Naive thymus-derived CD4-positive, alpha-beta T cell (primary cell): ENCODE measurements at regions of chr9 and their contacts with region 1.

Region 1: DNA sequence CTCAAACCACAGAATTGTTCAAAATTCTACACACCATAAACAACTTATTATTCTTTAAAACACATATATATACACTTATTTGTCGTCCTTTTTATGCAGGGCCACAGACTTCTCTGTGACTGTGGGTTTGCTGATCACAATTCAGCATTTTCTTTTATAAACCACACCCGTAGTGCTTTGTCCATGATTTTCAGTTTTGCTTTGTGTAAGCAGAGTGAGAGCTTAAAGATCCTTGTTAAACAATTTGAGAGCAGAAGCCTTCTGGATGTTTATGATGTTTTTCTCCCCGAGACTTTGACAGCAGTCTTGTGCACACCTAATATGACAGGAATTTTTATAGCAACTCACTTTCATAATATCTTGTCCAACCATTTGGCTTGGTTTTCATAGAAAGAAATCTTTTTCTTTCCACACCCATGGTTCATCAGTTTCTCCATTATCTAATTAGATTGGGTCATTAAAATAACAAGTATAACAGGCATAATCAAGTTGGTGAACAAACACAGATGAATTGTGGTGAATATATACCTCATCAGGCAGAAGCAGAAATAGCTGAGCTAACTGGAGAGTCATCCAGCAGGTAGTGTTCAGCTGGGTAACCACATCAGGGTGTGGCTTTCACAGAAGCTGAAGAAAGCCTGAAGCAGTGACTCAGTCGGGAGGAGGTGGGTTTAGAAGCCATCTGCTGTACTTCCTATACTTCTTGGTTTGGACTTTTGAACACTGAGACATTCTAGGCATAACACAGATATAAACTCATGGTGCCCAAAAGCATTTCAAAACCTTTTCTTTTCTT is 232.8 kb downstream of the DOCK8 start:
- DNase-seq: peak in 8 of 9 donors; percentile 27 to 60 (median 55)
- ATAC-seq: peak; percentile 96
- H3K4me3 ChIP-seq: no peak overlapping the region
- H3K4me3 Mint-ChIP-seq: peak overlapping the region in 3 of 10 donors; percentile 17 to 60 (median 32)
- H3K27ac ChIP-seq: no peak overlapping the region
- H3K27ac Mint-ChIP-seq: peak overlapping the region; percentile 35 to 85 (median 66)
- H3K4me1 ChIP-seq: peaks cover 11 to 14% of the 10 kb centered on the region in 2 donors
- H3K4me1 Mint-ChIP-seq: peaks cover 11 to 46% (median 22%) of the 10 kb centered on the region in 7 donors
- H3K27me3 ChIP-seq: no peaks in the 10 kb centered on the region
- H3K27me3 Mint-ChIP-seq: no peaks in the 10 kb centered on the region

Region 2: GRCh38 chr9:406886-407654 is 40.4 kb before region 1 on chr9:
- CTCF ChIA-PET with region 1: no interaction called
- POLR2A ChIA-PET with region 1: no interaction called
- intact Hi-C with region 1: loop called (anchors 5 kb)
- DNase-seq: no peak
- ATAC-seq: no peak
- H3K4me3 ChIP-seq: no peak overlapping the region
- H3K4me3 Mint-ChIP-seq: no peak overlapping the region
- H3K27ac ChIP-seq: no peak overlapping the region
- H3K27ac Mint-ChIP-seq: peak overlapping the region in 1 of 9 donors; percentile 57
- H3K4me1 ChIP-seq: no peaks in the 10 kb centered on the region
- H3K4me1 Mint-ChIP-seq: peaks cover 0 to 8% (median 3%) of the 10 kb centered on the region in 7 donors
- H3K27me3 ChIP-seq: no peaks in the 10 kb centered on the region
- H3K27me3 Mint-ChIP-seq: no peaks in the 10 kb centered on the region

Region 3: GRCh38 chr9:459491-460444 is 12.3 kb after region 1 on chr9:
- CTCF ChIA-PET with region 1: interaction called, 3 read pairs
- POLR2A ChIA-PET with region 1: interaction called, 4 read pairs
- intact Hi-C with region 1: loop called in 1 of 2 experiments (anchors 2 kb)
- DNase-seq: no peak
- ATAC-seq: peak; percentile 70
- H3K4me3 ChIP-seq: no peak overlapping the region
- H3K4me3 Mint-ChIP-seq: peak overlapping the region in 1 of 10 donors; percentile 66
- H3K27ac ChIP-seq: peak overlapping the region; percentile 20
- H3K27ac Mint-ChIP-seq: peak overlapping the region; percentile 1 to 83 (median 52)
- H3K4me1 ChIP-seq: no peaks in the 10 kb centered on the region
- H3K4me1 Mint-ChIP-seq: peaks cover 0 to 39% (median 13%) of the 10 kb centered on the region in 7 donors
- H3K27me3 ChIP-seq: no peaks in the 10 kb centered on the region
- H3K27me3 Mint-ChIP-seq: no peaks in the 10 kb centered on the region

Region 4: GRCh38 chr9:503881-504852 is 56.7 kb after region 1 on chr9:
- CTCF ChIA-PET with region 1: interaction called, 3 read pairs
- POLR2A ChIA-PET with region 1: no interaction called
- intact Hi-C with region 1: loop called in 1 of 2 experiments (anchors 1 kb)
- DNase-seq: peak; percentile 66 to 86 (median 82)
- ATAC-seq: peak; percentile 90
- H3K4me3 ChIP-seq: peak within 1 kb of the TSS; percentile 74
- H3K4me3 Mint-ChIP-seq: peak within 1 kb of the TSS; percentile 81 to 96 (median 90)
- H3K27ac ChIP-seq: peak within 1 kb of the TSS; percentile 56
- H3K27ac Mint-ChIP-seq: peak within 1 kb of the TSS; percentile 59 to 95 (median 88)
- H3K4me1 ChIP-seq: peaks cover 0 to 9% of the 10 kb centered on the region in 2 donors
- H3K4me1 Mint-ChIP-seq: peaks cover 7 to 32% (median 24%) of the 10 kb centered on the region in 7 donors
- H3K27me3 ChIP-seq: peaks cover 0 to 4% of the 10 kb centered on the region in 2 donors
- H3K27me3 Mint-ChIP-seq: peaks cover 0 to 54% (median 13%) of the 10 kb centered on the region in 5 donors

Region 5: GRCh38 chr9:546797-547223 is 99.4 kb after region 1 on chr9:
- CTCF ChIA-PET with region 1: no interaction called
- POLR2A ChIA-PET with region 1: no interaction called
- intact Hi-C with region 1: loop called in 1 of 2 experiments (anchors 1 kb)
- DNase-seq: peak in 4 of 9 donors; percentile 15 to 47 (median 34)
- ATAC-seq: no peak
- H3K4me3 ChIP-seq: no peak overlapping the region
- H3K4me3 Mint-ChIP-seq: peak overlapping the region in 5 of 10 donors; percentile 10 to 48 (median 11)
- H3K27ac ChIP-seq: no peak overlapping the region
- H3K27ac Mint-ChIP-seq: peak overlapping the region in 3 of 9 donors; percentile 46 to 68 (median 56)
- H3K4me1 ChIP-seq: no peaks in the 10 kb centered on the region
- H3K4me1 Mint-ChIP-seq: peaks cover 3 to 16% (median 12%) of the 10 kb centered on the region in 7 donors
- H3K27me3 ChIP-seq: no peaks in the 10 kb centered on the region
- H3K27me3 Mint-ChIP-seq: peaks cover 0 to 8% (median 2%) of the 10 kb centered on the region in 5 donors